Activated CD4-positive, alpha-beta T cell treated with anti-CD3 and anti-CD28 coated beads for 36 hours (primary cell): ENCODE measurements at regions of chr18 and their contacts with region 1.

Region 1: DNA sequence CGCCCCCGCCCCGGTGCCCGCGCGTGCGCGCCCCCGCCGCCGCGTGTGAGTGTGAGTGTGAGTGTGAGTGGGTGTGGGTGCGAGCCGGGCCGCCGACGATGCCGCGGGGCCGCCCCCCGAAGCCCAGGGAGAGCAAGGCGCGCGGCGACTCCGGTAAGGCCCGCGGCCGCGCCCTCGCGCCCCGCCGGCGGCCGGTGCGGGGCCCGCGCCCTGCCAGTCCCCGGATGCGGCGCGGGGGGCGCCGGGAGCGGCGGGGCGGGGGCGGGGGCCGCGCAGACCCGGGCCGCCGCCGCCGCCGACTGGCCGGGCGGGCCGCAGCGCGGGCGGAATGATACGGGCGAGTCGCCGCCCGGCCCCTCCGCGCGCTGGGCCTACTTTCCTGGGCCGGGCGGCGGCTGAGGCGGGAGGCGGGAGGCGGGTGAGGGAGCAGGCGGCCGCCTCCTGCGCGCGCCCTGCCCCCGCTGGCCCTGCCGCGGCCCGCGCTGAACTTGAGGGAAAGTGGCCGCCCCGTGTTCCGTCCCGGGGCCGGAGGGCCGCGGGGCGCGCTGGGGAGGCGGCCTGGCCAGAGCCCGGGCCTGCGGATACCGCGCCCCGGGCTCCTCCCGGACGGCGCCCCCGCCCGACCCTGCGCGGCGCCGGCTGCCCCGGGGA is at the start of gene ZNF236:
- DNase-seq: peak; percentile 79
- ATAC-seq: peak; percentile 51
- H3K4me3 Mint-ChIP-seq: peak within 1 kb of the TSS; percentile 91
- H3K27ac Mint-ChIP-seq: peak within 1 kb of the TSS; percentile 89
- H3K4me1 Mint-ChIP-seq: peaks cover 52% of the 10 kb centered on the region
- H3K27me3 Mint-ChIP-seq: no peaks in the 10 kb centered on the region
- total RNA-seq, gene ZNF236: 13.7 to 25.7 TPM

Region 2: GRCh38 chr18:76492669-76493212 is 329.9 kb before region 1 on chr18:
- CTCF ChIA-PET with region 1: no interaction called
- POLR2A ChIA-PET with region 1: no interaction called
- intact Hi-C with region 1: loop called in 1 of 2 experiments (anchors 5 kb)
- DNase-seq: peak; percentile 100
- ATAC-seq: peak; percentile 85
- H3K4me3 Mint-ChIP-seq: peak overlapping the region; percentile 87
- H3K27ac Mint-ChIP-seq: peak overlapping the region; percentile 89
- H3K4me1 Mint-ChIP-seq: peaks cover 36% of the 10 kb centered on the region
- H3K27me3 Mint-ChIP-seq: peaks cover 33% of the 10 kb centered on the region

Region 3: DNA sequence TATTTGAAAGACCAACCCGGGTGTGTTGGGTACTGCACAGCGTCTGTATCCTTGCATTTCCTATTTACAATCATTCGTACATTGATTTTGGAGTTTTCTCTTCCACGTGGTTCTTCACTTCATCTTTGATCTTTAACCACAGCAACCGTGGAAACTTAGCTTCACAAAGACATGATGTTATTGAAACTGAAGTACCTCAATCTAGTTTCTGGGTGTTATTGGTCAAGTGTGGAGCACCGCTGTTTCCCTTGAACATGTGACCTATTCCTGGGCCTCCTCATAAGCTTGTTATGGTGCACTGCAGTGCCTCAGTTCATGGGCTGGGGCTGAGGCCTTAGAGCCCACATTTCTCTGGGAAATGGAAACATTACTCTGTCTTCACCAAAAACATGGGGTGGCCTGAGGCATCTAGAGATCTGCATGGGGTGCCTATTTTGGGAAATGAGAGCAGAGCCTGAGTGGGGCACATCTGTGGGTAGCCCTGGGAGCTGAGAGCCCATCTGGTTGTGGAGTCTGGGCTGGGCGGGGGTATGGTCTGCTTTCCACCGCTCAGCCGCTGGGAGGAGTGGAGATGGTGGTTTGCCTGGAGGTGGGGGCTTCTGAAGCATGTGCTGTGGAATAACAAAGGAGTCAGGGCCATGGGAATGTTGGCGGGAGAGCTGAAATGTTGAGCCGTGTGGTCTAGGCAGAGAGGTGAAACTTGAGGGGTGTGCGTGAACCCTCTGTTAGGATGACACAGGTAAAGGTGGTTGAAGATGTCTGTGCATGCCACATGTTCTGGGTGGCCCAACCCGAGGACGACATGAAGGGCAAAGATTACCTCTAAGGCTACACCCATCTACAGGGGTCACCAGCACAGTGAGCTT is 37.1 kb after region 1 on chr18:
- CTCF ChIA-PET with region 1: interaction called, 6 read pairs
- POLR2A ChIA-PET with region 1: no interaction called
- intact Hi-C with region 1: loop called in 1 of 2 experiments (anchors 1 kb)
- DNase-seq: peak; percentile 63
- ATAC-seq: peak; percentile 98
- H3K4me3 Mint-ChIP-seq: peak overlapping the region; percentile 41
- H3K27ac Mint-ChIP-seq: peak overlapping the region; percentile 83
- H3K4me1 Mint-ChIP-seq: peaks cover 31% of the 10 kb centered on the region
- H3K27me3 Mint-ChIP-seq: no peaks in the 10 kb centered on the region

Region 4: GRCh38 chr18:76875390-76876325 is 53.0 kb after region 1 on chr18:
- CTCF ChIA-PET with region 1: no interaction called
- POLR2A ChIA-PET with region 1: no interaction called
- intact Hi-C with region 1: loop called in 1 of 2 experiments (anchors 2 kb)
- DNase-seq: peak; percentile 67
- ATAC-seq: peak; percentile 74
- H3K4me3 Mint-ChIP-seq: no peak overlapping the region
- H3K27ac Mint-ChIP-seq: peak overlapping the region; percentile 74
- H3K4me1 Mint-ChIP-seq: peaks cover 14% of the 10 kb centered on the region
- H3K27me3 Mint-ChIP-seq: no peaks in the 10 kb centered on the region

Region 5: GRCh38 chr18:77061946-77062517 is 239.4 kb after region 1 on chr18:
- CTCF ChIA-PET with region 1: no interaction called
- POLR2A ChIA-PET with region 1: no interaction called
- intact Hi-C with region 1: loop called in 1 of 2 experiments (anchors 2 kb)
- DNase-seq: peak; percentile 42
- ATAC-seq: peak; percentile 17
- H3K4me3 Mint-ChIP-seq: peak overlapping the region; percentile 47
- H3K27ac Mint-ChIP-seq: peak overlapping the region; percentile 98
- H3K4me1 Mint-ChIP-seq: peaks cover 83% of the 10 kb centered on the region
- H3K27me3 Mint-ChIP-seq: no peaks in the 10 kb centered on the region

Region 6: GRCh38 chr18:77132371-77133050 is 309.9 kb after region 1 on chr18 and contains the start of gene MBP:
- CTCF ChIA-PET with region 1: no interaction called
- POLR2A ChIA-PET with region 1: no interaction called
- intact Hi-C with region 1: loop called in 1 of 2 experiments (anchors 5 kb)
- DNase-seq: peak; percentile 83
- ATAC-seq: peak; percentile 59
- H3K4me3 Mint-ChIP-seq: peak within 1 kb of the TSS; percentile 99
- H3K27ac Mint-ChIP-seq: peak within 1 kb of the TSS; percentile 98
- H3K4me1 Mint-ChIP-seq: peaks cover 52% of the 10 kb centered on the region
- H3K27me3 Mint-ChIP-seq: no peaks in the 10 kb centered on the region
- total RNA-seq, gene MBP: 47.0 to 65.7 TPM